H1 (cell line): ENCODE measurements at regions of chr2 and their contacts with region 1.

Region 1: GRCh38 chr2:86221066-86221684 is 21.9 kb downstream of the MRPL35 start:
- DNase-seq: no peak
- H3K4me3 ChIP-seq: no peak overlapping the region
- H3K27ac ChIP-seq: no peak overlapping the region
- H3K4me1 ChIP-seq: peaks cover 2 to 12% (median 5%) of the 10 kb centered on the region in 4 experiments; a peak in 4 of 7 replicates
- H3K27me3 ChIP-seq: no peaks in the 10 kb centered on the region
- CTCF ChIP-seq: peak; percentile 79 to 87 (median 84)
- EP300 ChIP-seq: no peak
- POLR2A ChIP-seq: no peak
- RAD21 ChIP-seq: peak; percentile 81 to 89

Region 2: GRCh38 chr2:85999061-85999831 is 221.9 kb before region 1 on chr2:
- CTCF ChIA-PET with region 1: no interaction called
- POLR2A ChIA-PET with region 1: no interaction called
- DNase-seq: no peak
- H3K4me3 ChIP-seq: no peak overlapping the region
- H3K27ac ChIP-seq: no peak overlapping the region
- H3K4me1 ChIP-seq: peaks cover 0 to 4% (median 2%) of the 10 kb centered on the region in 4 experiments; a peak in 3 of 7 replicates
- H3K27me3 ChIP-seq: no peaks in the 10 kb centered on the region
- CTCF ChIP-seq: no peak
- EP300 ChIP-seq: no peak
- POLR2A ChIP-seq: no peak
- RAD21 ChIP-seq: no peak

Region 3: DNA sequence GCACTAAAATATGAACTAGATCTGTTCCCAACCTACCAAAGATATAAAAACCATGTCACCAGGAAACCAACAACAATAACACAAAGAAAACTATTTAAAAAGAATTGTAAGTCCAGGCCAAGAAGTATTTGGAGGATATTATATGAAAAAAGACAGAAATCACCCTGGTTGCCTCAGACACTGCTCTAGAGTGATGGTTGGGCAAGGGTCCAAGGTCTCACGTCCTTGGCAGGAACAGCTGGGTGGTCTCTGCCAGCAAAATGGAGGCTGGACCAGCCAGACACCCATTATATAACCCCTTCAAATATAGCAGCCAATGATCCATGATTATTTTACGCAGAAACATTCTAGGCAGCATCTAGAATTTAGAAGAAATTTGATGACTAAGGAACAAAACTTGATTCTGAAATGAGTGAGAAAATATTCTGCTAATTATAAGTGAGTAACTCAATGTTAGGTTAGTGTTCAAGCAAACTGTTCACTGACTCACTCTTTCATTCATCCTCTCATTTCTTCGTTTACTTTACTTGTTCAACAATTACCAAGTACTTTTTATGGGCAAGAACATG is 13.5 kb after region 1 on chr2:
- CTCF ChIA-PET with region 1: interaction called, 19 read pairs
- POLR2A ChIA-PET with region 1: interaction called, 3 read pairs
- DNase-seq: no peak
- H3K4me3 ChIP-seq: no peak overlapping the region
- H3K27ac ChIP-seq: no peak overlapping the region
- H3K4me1 ChIP-seq: no peaks in the 10 kb centered on the region; a peak in 2 of 7 replicates
- H3K27me3 ChIP-seq: no peaks in the 10 kb centered on the region
- CTCF ChIP-seq: no peak
- EP300 ChIP-seq: no peak
- POLR2A ChIP-seq: no peak
- RAD21 ChIP-seq: no peak

Region 4: DNA sequence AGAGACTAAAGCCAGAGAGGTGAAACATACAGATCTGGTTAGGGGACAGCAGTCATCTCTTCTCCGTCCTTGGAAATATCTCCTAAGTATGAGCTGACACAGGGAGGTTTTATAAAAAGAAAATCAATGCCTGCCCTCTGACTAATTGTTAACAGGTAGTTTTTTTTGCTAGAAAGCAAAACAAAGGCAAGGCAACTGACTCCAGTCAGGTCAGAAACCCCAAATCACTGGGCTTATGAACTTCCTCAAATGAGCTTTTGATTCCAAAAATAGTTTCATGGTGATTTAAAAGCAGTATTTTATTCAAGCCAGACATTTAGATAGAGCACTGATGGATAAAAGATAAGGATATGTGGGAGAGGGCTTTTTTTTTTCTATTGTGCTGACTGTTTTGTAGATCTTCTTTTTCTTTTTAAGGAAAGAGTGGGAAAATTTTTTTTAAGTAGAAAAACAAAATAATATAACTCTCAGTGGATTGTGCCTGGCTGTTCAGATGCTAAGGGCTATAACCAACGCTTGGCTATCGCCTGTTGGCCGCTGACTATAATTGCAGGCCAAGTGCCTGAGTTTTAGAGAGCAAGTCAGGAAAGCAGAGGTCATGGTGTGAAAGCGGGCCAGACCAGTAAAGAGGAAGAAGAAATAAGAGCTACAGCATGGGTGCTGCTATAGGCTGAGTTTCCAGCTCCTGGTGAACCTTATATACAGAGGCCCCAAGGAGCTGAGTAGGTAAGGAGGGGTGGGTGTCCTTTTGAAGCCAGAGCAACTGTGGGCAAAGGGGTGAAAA is 23.0 kb after region 1 on chr2:
- CTCF ChIA-PET with region 1: interaction called, 11 read pairs
- POLR2A ChIA-PET with region 1: no interaction called
- DNase-seq: no peak
- H3K4me3 ChIP-seq: no peak overlapping the region
- H3K27ac ChIP-seq: no peak overlapping the region
- H3K4me1 ChIP-seq: no peaks in the 10 kb centered on the region
- H3K27me3 ChIP-seq: no peaks in the 10 kb centered on the region
- CTCF ChIP-seq: peak in 2 of 3 experiments; percentile 22 to 34; a peak in 3 of 4 replicates
- EP300 ChIP-seq: no peak
- POLR2A ChIP-seq: no peak
- RAD21 ChIP-seq: peak in 1 of 2 experiments; percentile 47; a peak in 1 of 4 replicates

Region 5: DNA sequence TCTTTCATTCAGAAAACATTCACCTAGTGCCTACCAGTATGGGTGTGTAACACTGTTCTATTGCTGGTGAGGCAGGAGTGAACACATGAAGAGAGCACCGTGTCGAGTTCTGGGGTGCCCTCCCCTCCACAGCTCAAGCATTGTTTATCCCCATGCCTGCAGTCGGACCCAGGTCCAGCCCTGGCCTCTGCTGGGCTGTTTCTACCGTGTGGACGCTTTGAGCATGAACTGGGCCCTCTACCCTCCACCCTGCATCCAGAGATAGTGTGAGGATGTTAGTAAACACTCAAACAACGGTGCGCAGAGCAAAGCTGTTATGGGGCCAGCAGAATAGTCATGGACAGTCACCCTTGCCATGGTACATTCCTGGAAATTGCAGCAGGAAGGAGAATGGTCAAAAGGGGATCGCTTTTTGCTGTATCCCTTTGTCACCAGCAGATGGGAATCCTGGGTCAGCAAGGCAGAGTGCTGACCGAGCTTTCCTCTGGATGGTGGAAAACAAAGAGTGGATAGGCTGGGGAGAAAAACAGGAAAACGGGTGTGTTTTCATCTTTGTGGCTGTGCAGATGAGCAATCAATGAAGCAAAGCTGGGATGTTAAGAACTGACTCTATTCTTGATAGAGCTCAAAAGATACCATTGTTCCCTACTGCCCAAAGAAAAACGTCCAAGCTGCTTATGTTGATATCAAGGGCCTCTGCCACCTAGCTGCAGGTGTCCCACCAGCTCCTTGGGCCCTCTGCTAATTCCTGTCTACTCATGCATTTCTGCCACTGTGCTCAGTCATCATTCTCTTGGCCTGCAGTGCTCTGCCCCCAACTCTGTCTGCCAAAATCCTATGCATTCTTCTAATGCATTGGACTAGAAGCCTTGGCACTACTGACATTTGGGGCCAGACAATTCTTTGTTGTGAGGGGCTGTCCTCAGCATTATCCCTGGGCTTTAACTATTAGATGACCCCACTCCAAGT is 77.5 kb after region 1 on chr2:
- CTCF ChIA-PET with region 1: interaction called, 62 read pairs
- POLR2A ChIA-PET with region 1: no interaction called
- DNase-seq: no peak
- H3K4me3 ChIP-seq: no peak overlapping the region
- H3K27ac ChIP-seq: no peak overlapping the region
- H3K4me1 ChIP-seq: no peaks in the 10 kb centered on the region
- H3K27me3 ChIP-seq: no peaks in the 10 kb centered on the region
- CTCF ChIP-seq: peak; percentile 44 to 58 (median 57)
- EP300 ChIP-seq: no peak
- POLR2A ChIP-seq: no peak
- RAD21 ChIP-seq: peak; percentile 69 to 72

Region 6: DNA sequence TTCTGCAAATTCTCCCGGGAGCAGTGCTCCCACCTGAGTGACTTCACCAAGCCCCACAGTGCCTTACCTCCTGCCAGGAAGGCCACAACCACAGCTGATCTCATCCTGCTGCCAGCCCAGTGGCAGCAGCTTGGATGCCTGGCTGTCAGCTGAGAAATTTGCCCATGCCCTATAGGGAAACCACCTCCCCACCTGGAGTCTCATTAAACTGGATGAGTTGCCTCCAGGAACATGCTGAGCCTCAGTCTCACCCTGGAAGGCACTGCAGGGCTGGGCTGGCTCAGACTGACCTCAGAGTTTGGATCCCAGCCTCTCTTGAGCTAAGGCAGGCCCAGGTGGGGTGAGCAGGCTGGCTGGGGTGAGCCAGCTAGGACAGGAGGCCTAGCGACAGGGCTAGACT is 93.0 kb after region 1 on chr2:
- CTCF ChIA-PET with region 1: interaction called, 16 read pairs
- POLR2A ChIA-PET with region 1: no interaction called
- DNase-seq: no peak
- H3K4me3 ChIP-seq: no peak overlapping the region
- H3K27ac ChIP-seq: no peak overlapping the region
- H3K4me1 ChIP-seq: no peaks in the 10 kb centered on the region
- H3K27me3 ChIP-seq: no peaks in the 10 kb centered on the region
- CTCF ChIP-seq: no peak
- EP300 ChIP-seq: no peak
- POLR2A ChIP-seq: no peak
- RAD21 ChIP-seq: no peak

Region 7: DNA sequence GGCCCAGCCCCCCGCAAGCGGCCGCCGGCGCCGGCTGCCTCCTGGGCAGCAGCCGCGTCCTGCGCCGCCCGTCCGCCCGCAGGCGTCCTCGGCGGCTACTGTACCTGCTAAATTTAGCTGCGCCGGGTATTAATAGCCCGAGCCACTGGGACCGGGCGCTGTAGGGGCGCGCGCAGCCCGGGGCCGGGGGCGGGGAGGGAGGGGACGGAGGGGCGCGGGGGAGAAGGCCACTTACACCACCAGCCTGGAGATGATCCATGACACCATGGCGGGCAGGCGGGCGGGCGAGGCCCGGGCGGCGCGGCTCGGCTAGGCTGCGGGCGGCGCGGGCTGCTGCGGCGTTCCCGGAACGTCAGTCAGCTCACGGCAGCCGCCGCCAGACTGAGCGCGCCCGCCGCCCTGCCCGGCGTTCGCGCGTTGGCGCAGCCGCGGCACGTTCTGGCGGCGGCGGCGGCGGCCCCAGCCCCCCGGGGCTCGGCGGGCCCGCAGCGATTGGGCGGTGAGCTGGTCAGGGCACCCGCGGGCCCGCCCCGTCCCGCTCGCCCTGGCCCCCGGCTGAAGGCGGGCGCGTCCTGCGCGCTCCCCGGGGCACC is 116.2 kb after region 1 on chr2 and contains the start of gene REEP1:
- CTCF ChIA-PET with region 1: interaction called, 11 read pairs
- POLR2A ChIA-PET with region 1: no interaction called
- DNase-seq: no peak
- H3K4me3 ChIP-seq: peak within 1 kb of the TSS; percentile 43 to 68 (median 52)
- H3K27ac ChIP-seq: no peak within 1 kb of the TSS
- H3K4me1 ChIP-seq: peaks cover 0 to 3% (median 3%) of the 10 kb centered on the region in 4 experiments; a peak in 5 of 7 replicates
- H3K27me3 ChIP-seq: peaks cover 22 to 55% (median 46%) of the 10 kb centered on the region in 4 experiments
- CTCF ChIP-seq: no peak
- EP300 ChIP-seq: no peak
- POLR2A ChIP-seq: no peak
- RAD21 ChIP-seq: no peak
- total RNA-seq, gene REEP1: 1.5 TPM in 2 replicates

Region 8: DNA sequence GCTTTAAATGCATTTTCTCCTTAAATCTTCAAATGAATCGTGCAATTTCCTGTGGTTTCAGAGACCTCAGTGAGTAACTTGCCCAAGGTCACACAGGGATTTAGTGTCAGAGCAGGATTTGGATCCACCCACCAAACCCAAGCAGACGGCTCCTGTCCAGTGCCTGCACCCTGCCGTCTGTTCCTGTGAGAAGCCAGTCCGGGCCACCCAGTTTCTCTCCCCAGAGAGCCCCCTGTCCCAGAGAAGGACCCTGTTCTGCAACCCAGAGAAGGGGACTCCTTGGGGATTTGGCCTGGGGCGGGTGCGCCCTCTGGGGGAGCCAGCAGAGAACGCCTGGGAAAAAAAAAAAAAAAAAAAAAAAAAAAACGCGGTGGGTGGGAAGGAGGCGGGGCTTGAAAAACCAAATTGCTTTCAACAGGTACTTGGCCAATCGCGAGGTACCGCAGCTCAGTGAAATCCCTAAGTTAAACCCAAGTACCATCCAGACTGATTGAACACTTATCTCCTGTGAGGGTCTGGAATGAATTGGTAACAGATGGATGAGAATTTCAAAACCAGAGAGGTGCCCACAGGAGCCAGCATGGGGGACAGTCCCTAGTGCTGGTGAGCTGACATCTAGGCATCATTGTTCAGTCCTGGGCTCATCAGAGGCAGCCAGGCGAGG is 147.1 kb after region 1 on chr2:
- CTCF ChIA-PET with region 1: interaction called, 51 read pairs
- POLR2A ChIA-PET with region 1: no interaction called
- DNase-seq: peak; percentile 41 to 78
- H3K4me3 ChIP-seq: peak overlapping the region in 1 of 4 experiments; percentile 30; a peak in 1 of 8 replicates
- H3K27ac ChIP-seq: no peak overlapping the region
- H3K4me1 ChIP-seq: no peaks in the 10 kb centered on the region; a peak in 1 of 7 replicates
- H3K27me3 ChIP-seq: no peaks in the 10 kb centered on the region
- CTCF ChIP-seq: peak; percentile 43 to 68 (median 48)
- EP300 ChIP-seq: no peak
- POLR2A ChIP-seq: no peak
- RAD21 ChIP-seq: peak; percentile 81 to 84

Region 9: GRCh38 chr2:86686905-86687304 is 465.7 kb after region 1 on chr2:
- CTCF ChIA-PET with region 1: no interaction called
- POLR2A ChIA-PET with region 1: no interaction called
- DNase-seq: no peak
- H3K4me3 ChIP-seq: no peak overlapping the region
- H3K27ac ChIP-seq: no peak overlapping the region
- H3K4me1 ChIP-seq: no peaks in the 10 kb centered on the region
- H3K27me3 ChIP-seq: no peaks in the 10 kb centered on the region
- CTCF ChIP-seq: no peak
- EP300 ChIP-seq: no peak
- POLR2A ChIP-seq: no peak
- RAD21 ChIP-seq: no peak